B cell (primary cell): ENCODE measurements at regions of chr13 and their contacts with region 1.

Region 1: DNA sequence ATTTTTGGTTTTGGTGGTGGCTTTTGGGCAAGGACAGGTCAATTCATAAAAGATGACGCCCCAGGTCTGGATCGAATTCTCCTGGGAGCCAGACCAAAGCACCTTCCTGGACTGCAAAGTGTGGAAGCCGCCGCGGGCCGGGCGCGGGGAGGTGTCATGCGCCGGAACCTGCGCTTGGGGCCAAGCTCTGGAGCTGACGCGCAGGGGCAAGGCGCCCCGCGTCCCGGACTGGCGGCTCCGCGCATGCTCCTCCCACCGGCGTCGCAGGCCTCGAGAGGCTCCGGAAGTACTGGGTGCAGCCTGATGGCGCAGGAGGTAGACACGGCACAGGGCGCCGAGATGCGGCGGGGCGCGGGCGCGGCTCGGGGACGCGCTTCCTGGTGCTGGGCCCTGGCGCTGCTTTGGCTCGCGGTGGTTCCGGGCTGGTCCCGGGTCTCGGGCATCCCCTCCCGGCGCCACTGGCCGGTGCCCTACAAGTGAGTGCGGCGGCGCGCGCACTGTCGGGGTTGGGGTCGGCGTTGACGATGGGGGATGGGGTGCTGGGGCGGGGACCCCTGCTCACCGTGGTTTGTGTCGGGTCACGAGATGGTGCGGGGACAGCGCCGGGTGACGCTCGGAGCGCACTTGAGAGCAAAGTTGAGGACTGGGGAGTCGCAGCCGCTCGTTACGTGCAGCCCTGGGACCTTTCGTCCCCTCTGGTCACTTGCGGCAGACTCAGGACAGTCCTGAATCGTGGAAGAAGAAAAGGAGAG is at the start of gene CLN5:
- DNase-seq: peak; percentile 98
- ATAC-seq: peak; percentile 94
- H3K4me3 ChIP-seq: peak within 1 kb of the TSS; percentile 78 to 90 (median 86)
- H3K4me3 Mint-ChIP-seq: peak within 1 kb of the TSS; percentile 99
- H3K27ac ChIP-seq: peak within 1 kb of the TSS; percentile 88 to 93
- H3K27ac Mint-ChIP-seq: peak within 1 kb of the TSS; percentile 99
- H3K4me1 ChIP-seq: peaks cover 15 to 17% of the 10 kb centered on the region in 2 donors
- H3K4me1 Mint-ChIP-seq: peaks cover 28% of the 10 kb centered on the region
- H3K27me3 ChIP-seq: no peaks in the 10 kb centered on the region
- H3K27me3 Mint-ChIP-seq: peaks cover 5% of the 10 kb centered on the region
- CTCF ChIP-seq: no peak
- total RNA-seq, gene CLN5: 33.3 and 36.9 TPM in 2 replicates

Region 2: DNA sequence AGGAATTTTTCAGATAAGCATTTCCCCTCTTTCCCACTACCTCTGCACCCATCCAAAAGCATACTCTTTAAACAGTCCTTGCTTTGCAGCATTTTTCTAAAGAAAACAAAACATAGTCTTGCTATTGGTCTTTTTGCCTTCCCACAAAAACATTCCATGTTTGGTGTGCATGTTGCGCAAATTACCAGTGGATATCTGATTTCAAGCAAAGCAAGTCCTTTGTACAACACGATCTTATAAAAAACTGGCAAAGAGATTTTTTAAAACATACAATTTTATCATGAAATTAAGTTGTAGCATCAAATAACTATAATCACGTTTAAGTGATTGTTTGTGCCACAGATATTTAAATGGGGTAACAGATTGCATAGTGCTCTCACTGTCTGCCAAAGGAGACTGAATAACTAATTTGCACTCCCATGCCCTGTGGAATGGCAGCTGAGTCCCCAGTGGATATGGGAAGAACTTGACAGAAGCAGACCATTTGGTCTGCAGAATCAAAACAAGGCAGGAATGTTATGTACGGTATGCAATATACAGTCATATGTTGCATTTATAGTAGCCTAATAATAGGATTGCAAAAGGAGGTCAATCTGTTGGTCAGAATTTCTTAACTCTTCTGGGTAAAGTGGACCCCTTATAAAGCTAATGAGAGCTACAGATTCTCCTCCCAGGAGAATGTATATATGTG is 1795.7 kb before region 1 on chr13:
- CTCF ChIA-PET with region 1: no interaction called
- POLR2A ChIA-PET with region 1: no interaction called
- intact Hi-C with region 1: no loop called
- DNase-seq: no peak
- ATAC-seq: no peak
- H3K4me3 ChIP-seq: no peak overlapping the region
- H3K4me3 Mint-ChIP-seq: no peak overlapping the region
- H3K27ac ChIP-seq: no peak overlapping the region
- H3K27ac Mint-ChIP-seq: no peak overlapping the region
- H3K4me1 ChIP-seq: no peaks in the 10 kb centered on the region
- H3K4me1 Mint-ChIP-seq: no peaks in the 10 kb centered on the region
- H3K27me3 ChIP-seq: no peaks in the 10 kb centered on the region
- H3K27me3 Mint-ChIP-seq: peaks cover 9% of the 10 kb centered on the region
- CTCF ChIP-seq: no peak

Region 3: DNA sequence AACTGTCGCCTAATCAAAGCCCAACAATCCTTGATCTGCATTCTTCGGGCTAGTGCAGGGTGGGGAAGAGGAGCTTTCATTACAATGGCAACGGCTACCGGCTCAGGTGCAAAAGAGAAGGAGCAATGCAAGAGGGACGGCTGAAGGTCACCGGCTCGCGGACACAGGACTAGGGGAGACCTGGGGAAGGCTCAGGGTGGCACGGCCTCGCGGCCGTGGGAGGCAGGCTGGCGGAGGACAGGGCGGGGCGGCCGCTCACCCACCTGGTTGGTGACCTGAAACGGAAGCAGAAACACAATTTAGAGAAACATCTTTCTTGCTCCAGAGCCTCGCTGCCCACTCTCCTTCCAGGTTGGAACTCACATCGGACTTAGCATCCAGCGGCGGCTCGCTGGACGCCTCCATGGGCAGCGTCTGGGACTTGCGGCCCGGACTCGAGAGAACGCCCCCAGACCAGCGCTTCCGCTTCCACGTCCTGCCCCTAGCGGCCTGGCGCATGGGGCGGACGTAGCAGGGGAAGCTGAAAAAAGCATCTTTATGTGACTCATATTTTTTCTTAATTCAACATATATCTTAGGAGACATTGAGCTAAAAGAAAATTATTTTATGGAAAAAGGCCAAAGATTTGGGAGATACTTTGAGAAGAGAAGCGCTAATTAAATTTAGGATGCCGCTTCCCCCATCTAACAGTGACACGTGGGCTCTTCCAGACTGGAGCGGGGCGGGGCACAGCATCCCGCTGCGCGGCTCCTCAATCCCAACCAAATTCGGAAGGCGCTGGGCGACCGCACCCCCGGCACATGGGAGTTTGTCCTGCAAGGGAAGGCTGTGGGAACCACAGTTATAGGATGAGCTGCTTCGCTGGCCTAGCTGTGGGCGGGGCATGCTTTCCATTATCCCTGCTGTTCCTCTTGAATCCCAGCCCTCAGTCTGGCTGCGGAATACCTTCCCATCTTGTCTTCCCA is 1454.3 kb before region 1 on chr13 and contains the start of gene COMMD6:
- CTCF ChIA-PET with region 1: no interaction called
- POLR2A ChIA-PET with region 1: no interaction called
- intact Hi-C with region 1: loop called (anchors 5 kb)
- DNase-seq: peak; percentile 86
- ATAC-seq: peak; percentile 94
- H3K4me3 ChIP-seq: peak within 1 kb of the TSS; percentile 70 to 92 (median 86)
- H3K4me3 Mint-ChIP-seq: peak within 1 kb of the TSS; percentile 100
- H3K27ac ChIP-seq: peak within 1 kb of the TSS; percentile 56 to 75
- H3K27ac Mint-ChIP-seq: peak within 1 kb of the TSS; percentile 97
- H3K4me1 ChIP-seq: peaks cover 12 to 22% of the 10 kb centered on the region in 2 donors
- H3K4me1 Mint-ChIP-seq: peaks cover 43% of the 10 kb centered on the region
- H3K27me3 ChIP-seq: no peaks in the 10 kb centered on the region
- H3K27me3 Mint-ChIP-seq: no peaks in the 10 kb centered on the region
- CTCF ChIP-seq: peak; percentile 46
- total RNA-seq, gene COMMD6: 152 and 153 TPM in 2 replicates

Region 4: GRCh38 chr13:76980075-76980718 is 11.8 kb before region 1 on chr13:
- CTCF ChIA-PET with region 1: interaction called, 23 read pairs
- POLR2A ChIA-PET with region 1: interaction called, 3 read pairs
- intact Hi-C with region 1: no loop called
- DNase-seq: peak; percentile 82
- ATAC-seq: peak; percentile 100
- H3K4me3 ChIP-seq: peak overlapping the region in 3 of 5 experiments; percentile 13 to 24 (median 15)
- H3K4me3 Mint-ChIP-seq: peak overlapping the region; percentile 64
- H3K27ac ChIP-seq: no peak overlapping the region
- H3K27ac Mint-ChIP-seq: no peak overlapping the region
- H3K4me1 ChIP-seq: peaks cover 0 to 7% of the 10 kb centered on the region in 2 donors
- H3K4me1 Mint-ChIP-seq: peaks cover 4% of the 10 kb centered on the region
- H3K27me3 ChIP-seq: peaks cover 0 to 28% (median 14%) of the 10 kb centered on the region in 4 experiments
- H3K27me3 Mint-ChIP-seq: peaks cover 44% of the 10 kb centered on the region
- CTCF ChIP-seq: peak; percentile 99

Region 5: DNA sequence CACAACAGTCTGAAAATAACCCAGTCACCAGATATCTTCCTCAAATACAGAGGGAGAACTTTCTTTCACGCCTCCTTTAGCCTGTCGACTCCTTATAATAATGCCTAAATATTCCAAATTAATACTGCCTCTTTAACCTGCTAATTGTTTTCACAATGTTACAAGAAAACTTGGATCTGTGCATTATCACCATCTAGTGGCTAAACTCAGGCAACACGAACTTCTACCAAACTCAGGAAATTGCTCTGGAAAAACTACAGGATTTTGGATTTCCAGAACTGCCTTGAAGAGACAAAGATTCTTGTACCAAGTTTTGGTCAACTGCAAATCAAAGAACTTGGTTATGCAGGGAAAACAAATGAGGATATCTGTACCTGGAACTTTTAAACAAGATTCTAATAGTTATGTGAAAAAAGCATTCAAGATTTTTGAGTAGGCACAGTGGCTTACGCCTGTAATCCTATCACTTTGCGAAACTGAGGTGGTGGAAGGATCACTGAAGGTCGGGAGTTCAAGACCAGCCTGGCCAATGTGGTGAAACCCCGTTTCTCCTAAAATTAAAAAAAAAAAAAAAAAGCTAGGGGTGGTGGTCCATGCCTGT is 10.7 kb after region 1 on chr13:
- CTCF ChIA-PET with region 1: interaction called, 17 read pairs
- POLR2A ChIA-PET with region 1: interaction called, 3 read pairs
- intact Hi-C with region 1: no loop called
- DNase-seq: no peak
- ATAC-seq: no peak
- H3K4me3 ChIP-seq: no peak overlapping the region
- H3K4me3 Mint-ChIP-seq: no peak overlapping the region
- H3K27ac ChIP-seq: peak overlapping the region in 1 of 2 donors; percentile 64
- H3K27ac Mint-ChIP-seq: no peak overlapping the region
- H3K4me1 ChIP-seq: peaks cover 0 to 4% of the 10 kb centered on the region in 2 donors
- H3K4me1 Mint-ChIP-seq: peaks cover 26% of the 10 kb centered on the region
- H3K27me3 ChIP-seq: no peaks in the 10 kb centered on the region
- H3K27me3 Mint-ChIP-seq: no peaks in the 10 kb centered on the region
- CTCF ChIP-seq: peak; percentile 60

Region 6: GRCh38 chr13:77026818-77027585 is 35.0 kb after region 1 on chr13 and contains the start of gene FBXL3:
- CTCF ChIA-PET with region 1: interaction called, 8 read pairs
- POLR2A ChIA-PET with region 1: interaction called, 27 read pairs
- intact Hi-C with region 1: loop called (anchors 1 kb)
- DNase-seq: peak; percentile 91
- ATAC-seq: peak; percentile 64
- H3K4me3 ChIP-seq: peak within 1 kb of the TSS; percentile 66 to 91 (median 88)
- H3K4me3 Mint-ChIP-seq: peak within 1 kb of the TSS; percentile 99
- H3K27ac ChIP-seq: peak within 1 kb of the TSS; percentile 84 to 95
- H3K27ac Mint-ChIP-seq: peak within 1 kb of the TSS; percentile 98
- H3K4me1 ChIP-seq: peaks cover 26 to 42% of the 10 kb centered on the region in 2 donors
- H3K4me1 Mint-ChIP-seq: peaks cover 49% of the 10 kb centered on the region
- H3K27me3 ChIP-seq: no peaks in the 10 kb centered on the region
- H3K27me3 Mint-ChIP-seq: no peaks in the 10 kb centered on the region
- CTCF ChIP-seq: no peak
- total RNA-seq, gene FBXL3: 78.0 and 79.5 TPM in 2 replicates

Region 7: GRCh38 chr13:78658635-78659449 is 1666.9 kb after region 1 on chr13 and contains the start of gene OBI1:
- CTCF ChIA-PET with region 1: no interaction called
- POLR2A ChIA-PET with region 1: no interaction called
- intact Hi-C with region 1: loop called (anchors 5 kb)
- DNase-seq: peak; percentile 92
- ATAC-seq: peak; percentile 98
- H3K4me3 ChIP-seq: peak within 1 kb of the TSS; percentile 57 to 94 (median 86)
- H3K4me3 Mint-ChIP-seq: peak within 1 kb of the TSS; percentile 99
- H3K27ac ChIP-seq: peak within 1 kb of the TSS; percentile 24 to 86
- H3K27ac Mint-ChIP-seq: peak within 1 kb of the TSS; percentile 94
- H3K4me1 ChIP-seq: peaks cover 11 to 14% of the 10 kb centered on the region in 2 donors
- H3K4me1 Mint-ChIP-seq: peaks cover 41% of the 10 kb centered on the region
- H3K27me3 ChIP-seq: no peaks in the 10 kb centered on the region
- H3K27me3 Mint-ChIP-seq: peaks cover 3% of the 10 kb centered on the region
- CTCF ChIP-seq: no peak
- total RNA-seq, gene OBI1: 14.8 and 15.4 TPM in 2 replicates